Transverse colon (tissue), 4 donors: ENCODE measurements at regions of chr10 and their contacts with region 1.

Region 1: DNA sequence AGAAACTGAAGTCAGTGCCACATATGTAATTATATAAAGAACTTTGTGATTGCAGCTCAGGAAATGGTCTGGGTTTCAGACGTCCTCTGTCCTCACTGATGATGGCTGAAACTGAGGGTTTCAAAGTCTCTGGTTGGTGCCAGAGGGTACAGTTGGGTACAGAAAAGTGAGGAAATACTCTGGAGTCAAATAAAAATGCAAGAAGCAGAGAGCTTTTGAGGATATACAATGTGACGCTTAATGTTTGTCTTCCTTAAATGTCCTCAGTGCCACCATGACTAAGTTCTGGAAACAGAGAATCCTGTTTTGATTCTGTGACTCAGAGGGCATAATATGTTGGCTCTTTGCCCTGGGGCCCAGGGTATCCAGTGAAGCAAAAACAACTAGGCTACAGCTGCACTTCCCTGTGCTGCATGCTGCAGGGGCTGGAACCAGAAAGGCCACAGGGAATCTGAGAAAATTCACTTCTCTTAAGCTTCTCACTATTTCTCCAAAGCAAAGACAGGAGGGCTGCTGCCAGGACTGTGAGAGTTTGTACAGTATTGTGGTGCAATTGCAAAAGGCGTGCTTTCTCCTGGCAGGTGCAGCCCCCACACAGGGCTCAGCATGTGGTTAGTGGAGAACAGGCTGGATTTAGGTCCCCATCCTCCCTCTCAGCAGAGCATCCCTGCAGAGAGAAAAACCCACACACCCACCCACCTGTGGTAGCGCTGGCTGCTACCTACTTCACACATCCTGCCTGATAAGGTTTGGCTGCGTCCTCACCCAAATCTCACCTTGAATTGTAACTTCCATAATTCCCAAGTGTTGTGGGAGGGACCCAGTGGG is 169.5 kb upstream of the SVIL start:
- DNase-seq: peak; percentile 52
- H3K4me3 ChIP-seq: no peak overlapping the region
- H3K27ac ChIP-seq: peak overlapping the region; percentile 70 to 87 (median 72)
- H3K4me1 ChIP-seq: peaks cover 12 to 31% (median 21%) of the 10 kb centered on the region in 4 donors
- H3K27me3 ChIP-seq: no peaks in the 10 kb centered on the region
- CTCF ChIP-seq: no peak
- EP300 ChIP-seq: no peak
- POLR2A ChIP-seq: no peak

Region 2: DNA sequence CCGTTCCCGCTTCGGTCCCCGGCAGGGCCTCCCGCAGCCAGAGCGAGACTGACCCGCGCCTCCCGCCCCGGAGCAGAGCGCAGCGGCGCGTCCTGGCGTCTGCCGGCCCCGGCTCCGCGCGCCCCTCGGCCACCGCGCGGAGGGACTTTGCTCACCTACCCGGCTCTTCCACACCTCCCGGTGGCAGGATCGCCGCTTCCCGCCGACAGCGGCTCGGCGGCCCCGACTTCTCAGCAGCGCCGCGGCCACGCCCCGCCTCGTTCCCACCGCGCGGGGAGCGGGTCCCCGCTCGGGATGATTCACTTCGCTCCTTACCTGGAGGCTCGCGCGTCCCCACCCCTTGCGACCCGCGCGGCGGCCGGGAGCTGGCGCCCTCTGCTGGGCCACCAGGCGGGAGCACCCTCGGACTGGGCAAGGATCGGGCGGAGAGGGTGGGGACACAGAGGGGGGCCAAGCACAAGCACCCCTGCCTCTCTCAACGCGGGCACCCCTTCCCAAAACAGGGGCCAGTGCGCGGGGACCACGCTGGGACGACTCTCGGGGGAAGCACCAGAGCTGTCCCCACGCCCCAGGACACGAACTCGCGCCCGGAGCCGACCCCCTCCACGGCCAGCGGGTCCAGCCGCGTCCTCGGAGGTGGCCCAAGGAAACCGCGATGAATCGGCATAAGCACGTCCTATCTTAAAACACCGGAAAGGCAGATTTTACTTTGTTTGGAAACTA is 68.5 kb before region 1 on chr10:
- in situ Hi-C with region 1: no loop called
- intact Hi-C with region 1: loop called (anchors 10 kb)
- DNase-seq: peak; percentile 92
- H3K4me3 ChIP-seq: peak overlapping the region; percentile 66 to 96 (median 84)
- H3K27ac ChIP-seq: peak overlapping the region; percentile 95 to 99 (median 96)
- H3K4me1 ChIP-seq: peaks cover 5 to 45% (median 16%) of the 10 kb centered on the region in 4 donors
- H3K27me3 ChIP-seq: no peaks in the 10 kb centered on the region
- CTCF ChIP-seq: peak; percentile 89 to 98 (median 95)
- EP300 ChIP-seq: no peak
- POLR2A ChIP-seq: peak; percentile 67

Region 3: GRCh38 chr10:29841724-29842649 is 37.7 kb after region 1 on chr10:
- in situ Hi-C with region 1: no loop called
- intact Hi-C with region 1: loop called (anchors 5 kb)
- DNase-seq: peak; percentile 47
- H3K4me3 ChIP-seq: peak overlapping the region in 1 of 4 donors; percentile 0
- H3K27ac ChIP-seq: peak overlapping the region; percentile 81 to 89 (median 84)
- H3K4me1 ChIP-seq: peaks cover 0 to 22% (median 5%) of the 10 kb centered on the region in 4 donors
- H3K27me3 ChIP-seq: no peaks in the 10 kb centered on the region
- CTCF ChIP-seq: no peak
- EP300 ChIP-seq: peak; percentile 92
- POLR2A ChIP-seq: no peak

Region 4: GRCh38 chr10:29998142-29998808 is 194.0 kb after region 1 on chr10:
- in situ Hi-C with region 1: no loop called
- intact Hi-C with region 1: no loop called
- DNase-seq: peak; percentile 76
- H3K4me3 ChIP-seq: no peak overlapping the region
- H3K27ac ChIP-seq: no peak overlapping the region
- H3K4me1 ChIP-seq: peaks cover 5 to 24% (median 13%) of the 10 kb centered on the region in 4 donors
- H3K27me3 ChIP-seq: no peaks in the 10 kb centered on the region
- CTCF ChIP-seq: peak; percentile 87 to 98 (median 96)
- EP300 ChIP-seq: no peak
- POLR2A ChIP-seq: no peak